ENCODE measurements at regions of chr9 and their contacts with region 1.

Region 1: GRCh38 chr9:86044001-86044400 is 55.4 kb downstream of the GOLM1 start:
- DNase-seq: no peak
- ATAC-seq: no peak
- H3K4me3 Mint-ChIP-seq: no peak overlapping the region
- H3K27ac Mint-ChIP-seq: no peak overlapping the region
- H3K4me1 Mint-ChIP-seq: no peaks in the 10 kb centered on the region
- H3K27me3 Mint-ChIP-seq: no peaks in the 10 kb centered on the region
- CTCF ChIP-seq: no peak

Region 2: GRCh38 chr9:85940832-85941621 is 103.0 kb before region 1 on chr9 and contains the start of gene NAA35:
- CTCF ChIA-PET with region 1: no interaction called
- POLR2A ChIA-PET with region 1: no interaction called
- intact Hi-C with region 1: no loop called
- DNase-seq: peak; percentile 99
- ATAC-seq: peak; percentile 91
- H3K4me3 Mint-ChIP-seq: no peak within 1 kb of the TSS
- H3K27ac Mint-ChIP-seq: peak within 1 kb of the TSS; percentile 92
- H3K4me1 Mint-ChIP-seq: peaks cover 23% of the 10 kb centered on the region
- H3K27me3 Mint-ChIP-seq: no peaks in the 10 kb centered on the region
- CTCF ChIP-seq: no peak
- total RNA-seq, gene NAA35: 25.5 to 26.3 TPM

Region 3: GRCh38 chr9:85987236-85987635 is 56.8 kb before region 1 on chr9:
- CTCF ChIA-PET with region 1: no interaction called
- POLR2A ChIA-PET with region 1: no interaction called
- intact Hi-C with region 1: loop called (anchors 10 kb)
- DNase-seq: no peak
- ATAC-seq: no peak
- H3K4me3 Mint-ChIP-seq: no peak overlapping the region
- H3K27ac Mint-ChIP-seq: no peak overlapping the region
- H3K4me1 Mint-ChIP-seq: no peaks in the 10 kb centered on the region
- H3K27me3 Mint-ChIP-seq: no peaks in the 10 kb centered on the region
- CTCF ChIP-seq: no peak

Region 4: DNA sequence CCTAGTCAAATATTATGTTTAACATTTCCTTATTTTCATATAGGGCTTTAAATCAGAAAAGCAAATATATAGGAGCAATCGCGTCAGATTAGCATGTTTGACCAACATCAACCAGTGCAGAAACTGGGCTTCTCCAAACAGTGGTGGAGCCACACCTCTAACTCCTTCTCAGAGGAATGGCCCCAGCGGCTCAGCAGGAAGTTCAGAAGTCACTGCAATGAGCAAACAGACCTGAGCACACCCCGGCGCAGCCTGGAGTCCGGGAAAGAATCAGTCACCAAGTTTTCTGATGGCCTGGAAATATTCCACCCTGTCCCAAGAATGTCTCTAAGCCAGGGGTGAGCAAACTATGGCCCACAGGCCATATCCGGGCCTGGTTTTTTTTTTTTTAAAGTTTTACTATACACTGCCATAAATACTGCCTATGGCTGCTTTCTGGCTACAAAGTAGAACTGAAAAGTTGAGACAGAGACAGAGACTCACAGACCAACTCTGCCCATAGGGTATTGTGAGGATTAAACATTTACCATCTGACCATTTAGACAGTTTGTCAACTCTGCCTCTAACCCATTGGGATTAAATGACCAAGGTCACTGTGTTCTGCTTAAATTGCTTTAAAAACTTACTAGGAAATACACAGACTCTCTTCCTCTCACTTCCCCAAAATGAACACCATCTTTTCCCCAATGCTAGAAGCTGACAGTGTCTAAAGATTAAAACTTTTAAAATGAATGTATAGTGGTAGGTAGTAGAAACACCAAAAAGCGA is 50.0 kb after region 1 on chr9:
- CTCF ChIA-PET with region 1: no interaction called
- POLR2A ChIA-PET with region 1: no interaction called
- intact Hi-C with region 1: no loop called
- DNase-seq: no peak
- ATAC-seq: no peak
- H3K4me3 Mint-ChIP-seq: no peak overlapping the region
- H3K27ac Mint-ChIP-seq: no peak overlapping the region
- H3K4me1 Mint-ChIP-seq: no peaks in the 10 kb centered on the region
- H3K27me3 Mint-ChIP-seq: peaks cover 20% of the 10 kb centered on the region
- CTCF ChIP-seq: no peak

Region 5: DNA sequence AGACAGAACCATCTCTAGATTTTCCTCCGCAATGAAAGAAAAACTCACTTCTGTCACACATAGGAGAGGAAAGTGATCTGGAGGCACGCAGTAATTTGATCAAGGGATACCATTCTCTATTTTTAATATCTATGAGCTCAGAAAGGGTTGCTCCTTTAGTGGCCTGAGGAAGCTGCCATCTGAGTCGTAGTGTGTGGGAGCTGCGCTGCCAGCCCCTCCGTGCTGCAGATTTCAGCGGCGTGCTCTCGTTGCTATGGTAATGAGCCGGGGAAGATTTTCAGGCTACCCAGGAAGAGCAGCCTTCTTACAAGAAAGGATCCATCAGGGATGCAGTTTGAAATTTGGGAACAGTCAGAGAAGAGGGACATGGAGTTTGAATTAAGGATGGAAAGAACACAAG is 72.4 kb after region 1 on chr9:
- CTCF ChIA-PET with region 1: no interaction called
- POLR2A ChIA-PET with region 1: no interaction called
- intact Hi-C with region 1: no loop called
- DNase-seq: no peak
- ATAC-seq: no peak
- H3K4me3 Mint-ChIP-seq: no peak overlapping the region
- H3K27ac Mint-ChIP-seq: no peak overlapping the region
- H3K4me1 Mint-ChIP-seq: no peaks in the 10 kb centered on the region
- H3K27me3 Mint-ChIP-seq: peaks cover 10% of the 10 kb centered on the region
- CTCF ChIP-seq: no peak

Measured in activated CD8-positive, alpha-beta T cell treated with anti-CD3 and anti-CD28 coated beads for 36 hours (primary cell).